Right lobe of liver (tissue), 6 donors: ENCODE measurements at regions of chr7 and their contacts with region 1.

Region 1: DNA sequence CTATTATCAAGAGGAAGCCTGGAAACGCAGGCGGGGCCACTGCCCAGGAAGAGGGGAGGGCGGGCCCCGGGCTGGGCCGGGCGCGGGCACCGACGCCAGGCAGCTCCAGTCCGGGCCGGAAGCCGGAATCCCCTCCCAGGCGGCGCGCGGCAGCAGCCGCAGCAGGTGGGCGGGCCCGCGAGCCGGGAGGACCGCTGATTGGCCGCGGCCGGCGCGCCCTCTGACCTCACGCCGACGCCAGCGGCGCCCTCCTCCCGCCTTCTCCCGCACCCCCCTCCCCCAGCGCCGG is 438 bp downstream of the BCL7B start:
- DNase-seq: peak; percentile 96 to 97 (median 96)
- ATAC-seq: peak; percentile 92 to 98 (median 94)
- H3K4me3 ChIP-seq: peak overlapping the region; percentile 58 to 69 (median 68)
- H3K27ac ChIP-seq: peak overlapping the region; percentile 90 to 97 (median 93)
- H3K4me1 ChIP-seq: peaks cover 0 to 16% (median 8%) of the 10 kb centered on the region in 4 donors
- H3K27me3 ChIP-seq: no peaks in the 10 kb centered on the region
- CTCF ChIP-seq: no peak
- POLR2A ChIP-seq: no peak

Region 2: DNA sequence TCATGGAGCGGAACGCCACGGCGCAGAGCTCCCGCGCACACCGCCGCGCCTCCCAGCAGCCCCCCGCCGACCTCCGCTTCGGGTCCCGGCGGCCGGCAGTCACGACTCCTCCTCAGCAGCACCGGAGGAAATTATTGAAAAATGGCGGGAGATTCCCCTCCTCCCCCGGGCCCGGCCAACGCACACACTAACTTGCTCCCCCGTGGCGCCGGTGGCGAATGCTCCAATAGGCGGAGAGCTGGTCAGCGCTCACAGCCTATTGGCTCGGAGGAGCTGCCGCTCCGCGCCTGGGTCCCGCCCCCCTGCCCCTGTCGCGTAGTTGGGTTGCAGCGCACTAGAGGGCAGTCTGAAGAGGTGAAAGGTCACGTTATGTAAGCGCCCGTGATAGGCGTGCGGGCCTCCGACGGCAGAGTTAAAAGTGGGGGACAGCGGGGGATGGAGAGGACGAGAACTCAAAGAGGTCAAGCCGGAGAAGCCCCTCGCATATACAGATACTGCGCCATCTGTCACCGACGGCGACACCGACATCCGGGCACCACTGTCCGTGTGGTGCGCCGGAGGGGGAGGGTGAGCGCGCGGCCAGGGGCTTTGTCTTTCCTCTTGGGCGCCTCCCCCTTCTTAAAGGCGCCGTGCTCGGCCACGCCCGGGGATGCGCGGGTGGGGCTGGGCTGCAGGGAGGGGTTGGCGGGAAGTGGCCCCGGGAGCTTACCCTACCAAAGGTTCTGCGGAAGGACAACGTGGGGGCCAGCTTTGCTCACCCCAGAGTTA is 34.8 kb before region 1 on chr7 and contains the start of gene BAZ1B:
- intact Hi-C with region 1: loop called (anchors 5 kb)
- DNase-seq: peak; percentile 98 to 99 (median 99)
- ATAC-seq: peak; percentile 97 to 99 (median 98)
- H3K4me3 ChIP-seq: peak within 1 kb of the TSS; percentile 88 to 96 (median 95)
- H3K27ac ChIP-seq: peak within 1 kb of the TSS; percentile 84 to 87 (median 84)
- H3K4me1 ChIP-seq: peaks cover 0 to 34% (median 13%) of the 10 kb centered on the region in 4 donors
- H3K27me3 ChIP-seq: no peaks in the 10 kb centered on the region
- CTCF ChIP-seq: peak in 3 of 4 donors; percentile 13 to 23 (median 18)
- POLR2A ChIP-seq: peak; percentile 77
- total RNA-seq, gene BAZ1B: 19.3 to 26.2 (median 25.0) TPM

Region 3: DNA sequence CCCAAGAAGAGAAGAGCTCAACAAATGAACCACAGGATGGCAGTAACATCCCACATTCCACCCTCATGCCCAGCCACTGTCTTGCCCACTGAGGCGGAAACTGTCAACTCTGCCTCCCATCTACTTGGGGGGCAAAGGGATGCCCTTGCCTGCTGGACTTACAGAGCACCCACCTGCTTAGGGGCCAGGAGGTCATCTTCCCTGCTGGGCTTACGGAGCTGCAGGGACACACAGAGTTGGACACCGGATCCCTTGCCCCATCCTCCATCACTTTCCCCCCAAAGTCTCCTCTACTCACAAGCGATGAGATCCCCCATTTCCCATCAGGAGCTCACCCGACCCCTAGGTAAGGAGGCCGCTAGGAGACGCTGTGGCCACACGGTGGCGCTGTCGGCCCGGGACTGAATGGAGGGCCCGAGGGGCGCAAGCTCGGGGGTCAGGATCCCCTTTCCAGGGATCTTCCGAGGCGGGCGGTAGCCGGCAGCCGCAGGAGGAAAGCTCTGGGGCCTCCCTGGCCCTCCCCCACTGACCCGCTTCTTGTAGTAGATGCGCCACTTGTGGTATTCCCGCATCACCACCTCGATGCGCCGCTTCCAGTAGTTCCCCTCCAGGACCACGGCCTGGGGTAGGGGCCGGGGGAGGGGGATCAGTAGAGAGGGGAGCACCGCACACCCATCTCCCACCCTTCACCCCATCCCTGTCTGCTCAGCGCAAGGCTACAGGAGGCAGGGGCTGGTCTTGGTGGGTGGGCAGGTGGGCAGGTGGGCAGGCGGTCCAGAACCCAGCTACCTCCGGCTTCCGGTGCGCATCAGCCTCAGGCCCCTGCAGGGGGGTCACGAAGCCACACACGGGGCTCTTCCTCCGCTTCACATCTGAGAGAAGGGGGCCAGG is 50.0 kb after region 1 on chr7:
- intact Hi-C with region 1: no loop called
- DNase-seq: peak in 1 of 3 donors; percentile 57
- ATAC-seq: peak; percentile 23 to 46 (median 30)
- H3K4me3 ChIP-seq: no peak overlapping the region
- H3K27ac ChIP-seq: no peak overlapping the region
- H3K4me1 ChIP-seq: peaks cover 0 to 29% (median 12%) of the 10 kb centered on the region in 4 donors
- H3K27me3 ChIP-seq: no peaks in the 10 kb centered on the region
- CTCF ChIP-seq: peak; percentile 75 to 86 (median 83)
- POLR2A ChIP-seq: no peak

Region 4: DNA sequence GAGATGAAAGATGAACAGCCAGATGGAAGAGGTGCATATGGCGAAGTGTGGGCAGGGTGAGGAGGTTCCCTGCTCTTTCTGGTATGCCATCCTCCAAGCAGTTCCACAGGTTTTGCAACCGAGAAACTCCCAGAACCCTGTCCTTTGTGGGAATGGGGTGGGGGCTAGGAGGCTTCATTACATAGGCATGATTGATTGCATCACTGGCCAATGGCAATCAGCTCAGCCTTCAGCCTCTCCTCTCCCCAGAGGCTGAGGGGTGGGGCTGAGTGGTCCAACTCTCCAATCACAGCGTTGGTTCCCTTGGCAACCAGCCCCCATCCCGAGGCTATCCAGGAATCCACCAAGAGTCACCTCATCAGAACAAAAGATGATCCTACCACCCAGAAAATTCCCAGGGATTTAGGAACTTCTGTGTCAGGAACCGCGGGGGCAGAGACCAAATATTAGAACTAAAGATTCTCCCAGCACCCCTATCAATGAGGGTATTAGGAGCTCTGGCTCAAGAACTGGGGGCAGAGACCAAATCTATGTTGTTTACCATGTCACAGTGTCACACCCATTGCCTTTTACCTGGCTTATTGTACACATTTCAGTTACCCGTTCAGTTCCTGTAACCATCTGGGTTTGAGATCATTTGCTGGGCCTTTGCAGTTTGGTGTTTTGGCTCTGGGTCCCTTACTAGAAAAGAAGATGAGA is 235.7 kb after region 1 on chr7:
- intact Hi-C with region 1: no loop called
- DNase-seq: peak in 2 of 3 donors; percentile 20 to 39
- ATAC-seq: no peak
- H3K4me3 ChIP-seq: no peak overlapping the region
- H3K27ac ChIP-seq: no peak overlapping the region
- H3K4me1 ChIP-seq: peaks cover 0 to 3% (median 0%) of the 10 kb centered on the region in 4 donors
- H3K27me3 ChIP-seq: no peaks in the 10 kb centered on the region
- CTCF ChIP-seq: no peak
- POLR2A ChIP-seq: no peak